ENCODE measurements at regions of chr19 and their contacts with region 1.

Region 1: DNA sequence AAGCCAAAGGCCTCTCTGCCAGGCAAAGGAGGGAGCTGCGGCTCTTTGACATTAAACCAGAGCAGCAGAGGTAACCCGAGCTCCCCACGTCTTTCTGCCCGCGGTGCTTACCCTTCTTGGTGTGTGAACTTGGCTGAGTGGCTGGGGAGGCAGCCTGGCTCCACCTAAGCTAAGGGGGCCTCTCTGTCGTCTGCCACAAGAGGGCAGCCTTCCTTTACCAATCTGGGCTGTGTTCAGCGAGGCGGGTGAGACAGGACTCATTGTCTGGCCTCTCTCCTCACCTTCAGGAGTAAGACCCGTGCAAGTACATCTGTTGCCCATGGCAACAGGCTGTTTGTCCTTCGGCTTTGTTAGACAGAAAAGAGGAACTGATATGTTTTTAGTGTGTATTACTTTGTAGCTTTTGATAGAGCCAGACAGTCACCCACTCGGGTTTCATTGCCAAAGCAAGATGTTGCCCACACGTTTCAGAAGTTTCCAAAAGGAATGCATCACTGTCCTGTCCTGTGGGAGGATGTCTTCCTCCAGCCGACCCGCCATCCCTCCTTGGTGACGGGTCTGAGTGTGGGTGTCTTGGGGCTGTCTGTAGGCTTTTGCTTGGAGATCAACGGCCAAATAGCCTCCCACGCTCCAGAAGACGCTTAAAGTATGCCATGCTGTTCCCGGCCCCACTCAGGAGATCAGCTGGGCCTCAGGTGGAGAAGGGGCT is 4.6 kb downstream of the POP4 start:
- DNase-seq: peak; percentile 94
- H3K4me3 ChIP-seq: peak overlapping the region in 1 of 8 donors; percentile 15
- H3K27ac ChIP-seq: peak overlapping the region in 5 of 8 donors; percentile 6 to 75 (median 52)
- H3K4me1 ChIP-seq: peaks cover 5 to 44% (median 27%) of the 10 kb centered on the region in 6 donors
- H3K27me3 ChIP-seq: no peaks in the 10 kb centered on the region
- CTCF ChIP-seq: peak; percentile 80 to 96 (median 89)
- POLR2A ChIP-seq: no peak

Region 2: GRCh38 chr19:29714953-29715700 is 104.4 kb after region 1 on chr19 and contains the start of gene C19orf12:
- intact Hi-C with region 1: loop called (anchors 1 kb)
- DNase-seq: peak; percentile 92
- H3K4me3 ChIP-seq: peak within 1 kb of the TSS; percentile 47 to 97 (median 87)
- H3K27ac ChIP-seq: peak within 1 kb of the TSS; percentile 87 to 97 (median 95)
- H3K4me1 ChIP-seq: peaks cover 25 to 69% (median 55%) of the 10 kb centered on the region in 6 donors
- H3K27me3 ChIP-seq: no peaks in the 10 kb centered on the region
- CTCF ChIP-seq: peak in 1 of 11 experiments; percentile 12
- POLR2A ChIP-seq: peak; percentile 10 to 70 (median 61)
- total RNA-seq, gene C19orf12: 24.2 to 36.9 (median 30.2) TPM

Region 3: DNA sequence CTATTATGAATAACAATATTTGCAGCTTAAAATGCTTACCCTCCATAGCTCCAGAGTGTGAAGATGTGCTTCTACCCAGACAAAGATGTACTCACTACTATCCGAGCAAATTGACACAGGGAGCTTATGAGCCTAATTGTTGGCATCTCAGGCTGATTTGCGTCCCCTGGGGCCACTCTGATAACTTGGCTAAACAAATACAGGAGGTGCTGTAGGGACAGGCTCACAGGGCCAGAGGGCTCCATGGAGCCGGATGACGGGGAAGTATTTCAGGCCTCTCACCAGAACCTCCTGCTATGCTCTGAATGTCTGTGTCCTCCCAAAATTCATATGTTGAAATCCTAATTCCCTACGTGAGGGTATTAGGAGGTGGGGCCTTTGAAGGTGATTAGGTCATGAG is 131.1 kb after region 1 on chr19:
- intact Hi-C with region 1: no loop called
- DNase-seq: no peak
- H3K4me3 ChIP-seq: no peak overlapping the region
- H3K27ac ChIP-seq: no peak overlapping the region
- H3K4me1 ChIP-seq: no peaks in the 10 kb centered on the region
- H3K27me3 ChIP-seq: peaks cover 0 to 24% (median 0%) of the 10 kb centered on the region in 7 donors
- CTCF ChIP-seq: no peak
- POLR2A ChIP-seq: no peak

Measured in spleen (tissue), 13 donors.